Natural killer cell (primary cell): ENCODE measurements at regions of chr6 and their contacts with region 1.

Region 1: GRCh38 chr6:152301764-152302568 is 335.2 kb downstream of the SYNE1 start:
- DNase-seq: peak; percentile 88 to 94
- ATAC-seq: peak; percentile 92 to 98 (median 96)
- H3K4me3 ChIP-seq: peak overlapping the region; percentile 80
- H3K4me3 Mint-ChIP-seq: peak overlapping the region; percentile 100
- H3K27ac ChIP-seq: peak overlapping the region; percentile 82
- H3K27ac Mint-ChIP-seq: peak overlapping the region; percentile 98
- H3K4me1 ChIP-seq: peaks cover 3% of the 10 kb centered on the region
- H3K4me1 Mint-ChIP-seq: peaks cover 30 to 33% of the 10 kb centered on the region in 2 donors
- H3K27me3 ChIP-seq: no peaks in the 10 kb centered on the region
- H3K27me3 Mint-ChIP-seq: no peaks in the 10 kb centered on the region
- CTCF ChIP-seq: peak; percentile 54

Region 2: DNA sequence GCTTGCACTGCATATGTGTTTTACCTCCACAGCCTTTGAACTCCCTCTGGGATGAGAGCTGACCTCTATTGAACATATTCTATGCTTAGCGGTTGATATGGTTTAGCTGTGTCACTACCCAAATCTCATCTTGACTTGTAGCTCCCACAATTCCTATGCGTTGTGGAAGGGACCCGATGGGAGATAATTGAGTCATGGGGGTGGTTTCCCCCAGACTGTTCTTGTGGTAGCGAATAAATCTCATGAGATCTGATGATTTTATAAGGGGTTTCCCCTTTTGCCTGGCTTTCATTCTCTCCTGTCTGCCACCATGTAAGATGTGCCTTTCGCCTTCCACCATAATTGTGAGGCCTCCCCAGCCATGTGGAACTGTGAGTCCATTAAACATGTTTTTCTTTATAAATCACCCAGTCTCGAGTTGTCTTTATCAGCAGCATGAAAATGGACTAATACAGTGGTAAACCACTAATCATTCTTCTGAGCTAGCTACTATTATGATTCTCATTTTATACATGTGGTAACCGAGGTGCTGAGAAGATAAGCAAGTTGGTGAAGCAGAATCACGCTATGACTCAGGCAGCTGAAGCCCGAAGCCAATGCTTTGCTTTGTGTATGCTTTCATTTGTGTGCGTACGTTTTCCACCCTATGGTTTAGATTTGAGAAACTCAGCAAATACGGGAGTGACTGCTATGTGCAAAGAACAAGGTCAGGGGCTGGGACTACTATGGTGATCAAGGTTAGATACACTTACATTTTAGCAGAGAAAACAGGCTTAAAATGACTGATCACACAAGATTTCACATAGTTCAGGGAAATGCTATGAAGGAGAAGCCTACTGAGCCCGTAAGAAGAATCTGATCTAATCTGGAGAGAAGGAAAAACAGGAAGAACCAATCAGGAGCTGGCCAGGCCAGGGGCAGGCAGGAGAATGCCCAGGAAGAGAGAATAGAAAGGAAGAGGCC is 131.0 kb before region 1 on chr6:
- intact Hi-C with region 1: no loop called
- DNase-seq: peak in 1 of 2 donors; percentile 80
- ATAC-seq: peak; percentile 63 to 91 (median 80)
- H3K4me3 ChIP-seq: no peak overlapping the region
- H3K4me3 Mint-ChIP-seq: peak overlapping the region; percentile 28
- H3K27ac ChIP-seq: peak overlapping the region; percentile 67
- H3K27ac Mint-ChIP-seq: peak overlapping the region; percentile 72 to 89
- H3K4me1 ChIP-seq: peaks cover 5% of the 10 kb centered on the region
- H3K4me1 Mint-ChIP-seq: peaks cover 26 to 45% of the 10 kb centered on the region in 2 donors
- H3K27me3 ChIP-seq: no peaks in the 10 kb centered on the region
- H3K27me3 Mint-ChIP-seq: no peaks in the 10 kb centered on the region
- CTCF ChIP-seq: no peak

Region 3: GRCh38 chr6:152184917-152185574 is 116.9 kb before region 1 on chr6:
- intact Hi-C with region 1: loop called (anchors 5 kb)
- DNase-seq: peak in 1 of 2 donors; percentile 66
- ATAC-seq: peak; percentile 70 to 75 (median 73)
- H3K4me3 ChIP-seq: peak overlapping the region; percentile 48
- H3K4me3 Mint-ChIP-seq: peak overlapping the region; percentile 94
- H3K27ac ChIP-seq: peak overlapping the region; percentile 82
- H3K27ac Mint-ChIP-seq: peak overlapping the region; percentile 96 to 97
- H3K4me1 ChIP-seq: peaks cover 23% of the 10 kb centered on the region
- H3K4me1 Mint-ChIP-seq: peaks cover 57 to 66% of the 10 kb centered on the region in 2 donors
- H3K27me3 ChIP-seq: no peaks in the 10 kb centered on the region
- H3K27me3 Mint-ChIP-seq: no peaks in the 10 kb centered on the region
- CTCF ChIP-seq: no peak

Region 4: DNA sequence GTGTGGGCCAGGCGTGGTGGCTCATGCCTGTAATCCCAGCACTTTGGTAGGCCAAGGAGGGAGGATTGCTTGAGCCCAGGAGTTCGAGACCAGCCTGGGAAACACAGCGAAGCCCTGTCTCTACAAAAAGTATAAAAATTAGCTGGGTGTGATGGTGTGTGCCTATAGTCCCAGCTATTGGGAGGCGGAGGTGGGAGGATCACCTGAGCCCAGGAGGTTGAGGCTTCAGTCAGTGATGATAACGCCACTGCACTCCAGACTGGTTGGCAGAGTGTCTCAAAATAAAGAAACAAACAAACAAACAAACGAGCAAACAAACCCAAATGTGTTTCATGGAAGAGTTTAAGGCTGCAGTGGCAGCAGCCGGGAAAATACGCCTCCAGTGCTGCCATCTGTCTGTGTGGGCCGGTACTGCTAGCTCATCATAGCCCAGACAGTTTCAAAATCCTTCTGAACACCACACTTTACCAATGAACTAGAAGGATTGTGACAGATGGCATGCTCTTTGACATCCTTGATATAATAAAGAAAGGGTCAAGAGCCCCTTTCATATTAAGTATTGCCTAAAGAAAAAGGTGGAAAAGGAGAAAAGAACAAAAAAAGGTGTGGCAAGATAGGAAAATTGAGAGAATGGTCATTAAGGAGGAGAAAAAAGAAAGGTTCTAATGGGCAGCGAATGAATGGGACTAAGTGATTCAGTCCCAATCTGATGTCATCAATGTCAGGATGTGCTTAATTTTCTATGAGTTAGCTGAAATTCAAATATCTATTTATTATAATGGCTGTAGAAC is 36.6 kb after region 1 on chr6:
- intact Hi-C with region 1: loop called (anchors 5 kb)
- DNase-seq: peak; percentile 35 to 78
- ATAC-seq: peak; percentile 82 to 98 (median 84)
- H3K4me3 ChIP-seq: no peak overlapping the region
- H3K4me3 Mint-ChIP-seq: no peak overlapping the region
- H3K27ac ChIP-seq: no peak overlapping the region
- H3K27ac Mint-ChIP-seq: peak overlapping the region; percentile 49 to 53
- H3K4me1 ChIP-seq: no peaks in the 10 kb centered on the region
- H3K4me1 Mint-ChIP-seq: peaks cover 6% of the 10 kb centered on the region in 2 donors
- H3K27me3 ChIP-seq: no peaks in the 10 kb centered on the region
- H3K27me3 Mint-ChIP-seq: no peaks in the 10 kb centered on the region
- CTCF ChIP-seq: peak; percentile 96

Region 5: DNA sequence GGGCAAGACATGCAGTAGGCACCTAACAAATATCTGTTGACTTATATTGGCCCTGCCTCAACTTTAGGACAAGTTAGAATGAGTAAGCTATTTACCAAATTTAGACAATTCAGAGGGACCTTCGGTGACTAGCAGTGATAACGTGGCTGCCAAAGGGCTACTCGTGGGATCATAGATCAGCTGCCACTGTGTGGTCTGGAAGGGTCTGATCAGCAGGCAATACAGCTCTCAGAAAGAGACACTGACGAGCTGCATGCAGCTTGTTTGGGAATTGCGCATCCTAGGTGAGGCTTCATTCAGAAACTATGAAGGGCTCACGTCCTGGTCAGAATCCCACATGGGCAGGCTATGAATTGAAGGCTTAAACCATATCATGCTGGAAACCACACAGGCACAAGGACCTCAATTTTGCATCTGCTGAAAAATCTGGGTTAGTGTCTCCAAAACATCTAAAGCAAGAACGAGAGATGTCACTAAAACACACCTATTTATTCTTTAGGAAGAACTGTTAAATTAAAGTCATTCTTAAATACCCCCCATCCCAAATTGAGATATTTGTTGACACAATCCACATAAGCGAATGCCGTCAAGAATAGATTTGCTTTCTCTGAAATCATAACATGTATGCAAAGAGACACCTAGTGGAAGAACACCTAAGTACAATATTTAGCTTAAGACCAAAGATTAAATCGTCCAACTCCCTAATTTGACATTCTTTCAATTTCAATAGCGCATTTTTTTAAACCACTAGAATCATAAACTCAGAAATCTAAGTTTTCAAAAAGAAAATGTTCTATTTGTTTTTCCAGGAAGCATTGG is 1975.1 kb after region 1 on chr6:
- intact Hi-C with region 1: no loop called
- DNase-seq: peak in 1 of 2 donors; percentile 79
- ATAC-seq: peak; percentile 70 to 92 (median 86)
- H3K4me3 ChIP-seq: peak overlapping the region; percentile 17
- H3K4me3 Mint-ChIP-seq: peak overlapping the region; percentile 80
- H3K27ac ChIP-seq: no peak overlapping the region
- H3K27ac Mint-ChIP-seq: peak overlapping the region in 1 of 2 donors; percentile 76
- H3K4me1 ChIP-seq: peaks cover 8% of the 10 kb centered on the region
- H3K4me1 Mint-ChIP-seq: peaks cover 15 to 16% of the 10 kb centered on the region in 2 donors
- H3K27me3 ChIP-seq: no peaks in the 10 kb centered on the region
- H3K27me3 Mint-ChIP-seq: no peaks in the 10 kb centered on the region
- CTCF ChIP-seq: peak; percentile 80